Heart left ventricle (tissue), 16 donors: ENCODE measurements at regions of chr14 and their contacts with region 1.

Region 1: GRCh38 chr14:64549781-64550620 is at the start of gene PPP1R36:
- DNase-seq: peak in 4 of 5 donors; percentile 27 to 77 (median 46)
- ATAC-seq: peak in 3 of 4 donors; percentile 83 to 95 (median 95)
- H3K4me3 ChIP-seq: peak within 1 kb of the TSS; percentile 12 to 57 (median 46)
- H3K27ac ChIP-seq: no peak within 1 kb of the TSS
- H3K4me1 ChIP-seq: peaks cover 0 to 16% (median 10%) of the 10 kb centered on the region in 12 donors
- H3K27me3 ChIP-seq: peaks cover 0 to 17% (median 0%) of the 10 kb centered on the region in 9 donors
- CTCF ChIP-seq: no peak
- POLR2A ChIP-seq: no peak
- total RNA-seq, gene PPP1R36: 0.39 to 1.0 (median 0.62) TPM in 4 of 9 donors, not detected in the others

Region 2: GRCh38 chr14:64630778-64631177 is 80.8 kb after region 1 on chr14:
- intact Hi-C with region 1: loop called in 1 of 10 experiments (anchors 2 kb)
- DNase-seq: no peak
- ATAC-seq: no peak
- H3K4me3 ChIP-seq: no peak overlapping the region
- H3K27ac ChIP-seq: peak overlapping the region in 1 of 12 donors; percentile 70
- H3K4me1 ChIP-seq: peaks cover 0 to 2% (median 0%) of the 10 kb centered on the region in 12 donors
- H3K27me3 ChIP-seq: no peaks in the 10 kb centered on the region
- CTCF ChIP-seq: no peak
- POLR2A ChIP-seq: no peak

Region 3: DNA sequence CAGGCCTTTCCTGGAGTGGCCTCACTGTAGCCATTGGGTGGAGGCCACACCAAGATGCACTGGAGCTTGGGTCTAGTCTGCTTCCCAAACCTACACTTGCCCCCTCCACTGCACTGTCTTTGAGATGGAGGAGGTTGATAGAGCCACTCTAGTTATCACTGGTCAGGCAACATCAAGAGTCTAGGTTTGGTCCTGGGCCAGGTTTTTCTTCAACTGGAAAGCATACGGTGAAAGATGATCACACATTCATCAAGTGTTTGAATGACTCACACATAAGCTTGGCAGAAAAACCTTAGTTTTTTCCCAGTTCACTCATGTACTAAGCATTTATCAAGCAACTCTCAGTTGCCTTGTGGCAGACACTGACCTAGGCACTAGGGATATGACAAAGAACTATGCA is 238.7 kb after region 1 on chr14:
- intact Hi-C with region 1: no loop called
- DNase-seq: no peak
- ATAC-seq: peak in 1 of 4 donors; percentile 15
- H3K4me3 ChIP-seq: no peak overlapping the region
- H3K27ac ChIP-seq: no peak overlapping the region
- H3K4me1 ChIP-seq: peaks cover 0 to 8% (median 0%) of the 10 kb centered on the region in 12 donors
- H3K27me3 ChIP-seq: no peaks in the 10 kb centered on the region
- CTCF ChIP-seq: no peak
- POLR2A ChIP-seq: no peak